Right ventricle myocardium superior (tissue), 1 donor: ENCODE measurements at regions of chr19 and their contacts with region 1.

Region 1: DNA sequence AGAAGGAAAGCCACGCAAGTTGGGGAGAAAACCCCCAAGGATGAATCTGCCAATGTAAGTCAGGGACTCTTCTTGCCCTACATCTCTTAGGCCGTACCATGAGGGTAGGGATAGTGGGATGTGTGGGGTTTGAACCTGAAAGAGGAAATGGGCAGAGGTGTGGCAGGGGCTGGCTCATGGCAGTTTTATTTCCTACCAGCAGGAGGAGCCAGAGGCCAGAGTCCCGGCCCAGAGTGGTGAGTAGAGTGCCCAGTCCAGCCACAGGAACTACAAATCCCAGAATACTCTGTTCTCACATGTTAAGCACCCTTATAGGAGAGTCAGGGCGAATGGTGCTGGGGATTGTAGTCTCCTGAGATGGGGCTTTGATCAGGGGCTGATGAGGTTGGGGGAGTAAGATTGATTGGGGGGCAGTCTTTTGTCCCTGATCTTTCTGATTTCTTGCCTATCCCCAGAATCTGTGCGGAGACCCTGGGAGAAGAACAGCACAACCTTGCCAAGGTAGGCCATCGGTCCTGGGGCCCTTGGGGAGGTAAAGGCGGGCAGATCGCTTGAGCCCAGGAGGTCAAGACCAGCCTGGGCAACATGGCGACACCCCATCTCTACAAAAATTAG is 16.5 kb downstream of the VASP start:
- DNase-seq: peak; percentile 81
- ATAC-seq: peak; percentile 92

Region 2: GRCh38 chr19:45038931-45039893 is 484.5 kb before region 1 on chr19 and contains the start of gene CLASRP:
- intact Hi-C with region 1: no loop called
- DNase-seq: peak; percentile 95
- ATAC-seq: peak; percentile 99
- total RNA-seq, gene CLASRP: 31.7 TPM

Region 3: GRCh38 chr19:45439569-45440254 is 84.0 kb before region 1 on chr19:
- intact Hi-C with region 1: no loop called
- DNase-seq: peak; percentile 92
- ATAC-seq: peak; percentile 80

Region 4: DNA sequence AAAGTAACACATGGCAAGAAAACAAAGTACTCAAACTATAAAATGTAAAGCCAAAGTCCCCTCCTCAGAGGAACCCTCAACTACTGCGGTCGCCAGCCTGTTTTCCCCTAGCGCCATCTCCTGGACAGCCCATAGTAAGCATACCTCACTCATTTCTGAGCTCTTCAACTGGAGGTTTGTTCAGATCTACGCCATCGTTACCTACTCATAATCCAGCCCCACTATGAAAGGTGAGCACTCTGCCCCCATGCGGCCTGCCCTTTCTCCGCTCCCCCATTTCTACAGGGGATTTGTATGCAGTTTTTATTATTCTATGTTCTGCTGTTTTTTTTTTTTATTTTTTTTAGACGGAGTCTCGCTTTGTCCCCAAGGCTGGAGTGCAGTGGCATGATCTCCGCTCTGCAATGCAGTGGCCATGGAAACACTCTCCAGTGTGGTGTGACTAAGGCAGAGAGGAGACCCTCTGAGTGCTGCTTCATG is 34.7 kb after region 1 on chr19:
- intact Hi-C with region 1: loop called (anchors 5 kb)
- DNase-seq: no peak
- ATAC-seq: peak; percentile 54

Region 5: GRCh38 chr19:45569619-45570421 is 46.1 kb after region 1 on chr19:
- intact Hi-C with region 1: loop called (anchors 5 kb)
- DNase-seq: peak; percentile 77
- ATAC-seq: peak; percentile 78

Region 6: GRCh38 chr19:45643024-45643926 is 119.5 kb after region 1 on chr19:
- intact Hi-C with region 1: loop called (anchors 5 kb)
- DNase-seq: peak; percentile 93
- ATAC-seq: peak; percentile 68